Prostate gland (tissue), 2 donors: ENCODE measurements at regions of chr13 and their contacts with region 1.

Region 1: GRCh38 chr13:41075034-41075433 is 13.7 kb downstream of the WBP4 start:
- DNase-seq: peak; percentile 14
- H3K4me3 ChIP-seq: no peak overlapping the region
- H3K27ac ChIP-seq: no peak overlapping the region
- H3K4me1 ChIP-seq: no peaks in the 10 kb centered on the region
- H3K27me3 ChIP-seq: no peaks in the 10 kb centered on the region
- CTCF ChIP-seq: peak in 3 of 4 experiments; percentile 47 to 59 (median 48)
- POLR2A ChIP-seq: no peak

Region 2: GRCh38 chr13:41222259-41222852 is 147.3 kb after region 1 on chr13:
- intact Hi-C with region 1: loop called (anchors 5 kb)
- DNase-seq: peak; percentile 41
- H3K4me3 ChIP-seq: no peak overlapping the region
- H3K27ac ChIP-seq: peak overlapping the region in 1 of 2 donors; percentile 43
- H3K4me1 ChIP-seq: peaks cover 3% of the 10 kb centered on the region
- H3K27me3 ChIP-seq: no peaks in the 10 kb centered on the region
- CTCF ChIP-seq: peak; percentile 30 to 76 (median 71)
- POLR2A ChIP-seq: no peak